Left cardiac atrium (tissue), 4 donors: ENCODE measurements at regions of chr3 and their contacts with region 1.

Region 1: DNA sequence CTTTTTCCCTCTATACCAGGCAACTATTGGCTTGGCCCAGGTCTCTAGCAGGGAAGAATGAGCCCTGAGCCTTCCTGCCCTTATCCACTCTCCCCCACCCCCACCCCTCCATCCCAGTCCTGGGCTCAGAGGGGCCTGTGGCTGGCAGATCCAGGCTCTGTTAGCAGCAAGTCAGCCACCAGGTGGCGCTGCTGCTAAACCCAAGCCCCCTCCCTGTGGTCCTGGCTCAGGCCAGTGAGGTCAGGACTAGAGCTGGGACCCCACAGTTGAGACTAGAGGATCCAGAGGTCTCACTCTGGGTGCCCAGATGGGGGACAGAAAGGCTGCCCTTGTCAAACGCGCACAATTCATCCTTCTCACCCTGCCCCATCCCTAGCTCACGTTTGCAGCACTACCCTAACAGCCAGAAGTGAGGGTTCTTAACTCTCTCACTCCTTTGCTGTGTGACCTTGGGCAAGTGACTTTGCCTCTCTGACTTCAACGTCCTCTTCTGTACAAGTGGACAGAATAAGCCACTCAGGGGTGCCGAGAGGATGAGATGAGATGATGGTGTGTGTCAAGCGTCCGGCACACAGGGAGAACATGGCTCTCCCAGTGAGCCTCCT is 46.8 kb upstream of the SLC6A1 start:
- DNase-seq: peak; percentile 72
- ATAC-seq: peak; percentile 72 to 86

Region 2: GRCh38 chr3:10758304-10759061 is 187.3 kb before region 1 on chr3:
- intact Hi-C with region 1: loop called (anchors 5 to 10 kb)
- DNase-seq: peak; percentile 44
- ATAC-seq: peak; percentile 87 to 93

Region 3: DNA sequence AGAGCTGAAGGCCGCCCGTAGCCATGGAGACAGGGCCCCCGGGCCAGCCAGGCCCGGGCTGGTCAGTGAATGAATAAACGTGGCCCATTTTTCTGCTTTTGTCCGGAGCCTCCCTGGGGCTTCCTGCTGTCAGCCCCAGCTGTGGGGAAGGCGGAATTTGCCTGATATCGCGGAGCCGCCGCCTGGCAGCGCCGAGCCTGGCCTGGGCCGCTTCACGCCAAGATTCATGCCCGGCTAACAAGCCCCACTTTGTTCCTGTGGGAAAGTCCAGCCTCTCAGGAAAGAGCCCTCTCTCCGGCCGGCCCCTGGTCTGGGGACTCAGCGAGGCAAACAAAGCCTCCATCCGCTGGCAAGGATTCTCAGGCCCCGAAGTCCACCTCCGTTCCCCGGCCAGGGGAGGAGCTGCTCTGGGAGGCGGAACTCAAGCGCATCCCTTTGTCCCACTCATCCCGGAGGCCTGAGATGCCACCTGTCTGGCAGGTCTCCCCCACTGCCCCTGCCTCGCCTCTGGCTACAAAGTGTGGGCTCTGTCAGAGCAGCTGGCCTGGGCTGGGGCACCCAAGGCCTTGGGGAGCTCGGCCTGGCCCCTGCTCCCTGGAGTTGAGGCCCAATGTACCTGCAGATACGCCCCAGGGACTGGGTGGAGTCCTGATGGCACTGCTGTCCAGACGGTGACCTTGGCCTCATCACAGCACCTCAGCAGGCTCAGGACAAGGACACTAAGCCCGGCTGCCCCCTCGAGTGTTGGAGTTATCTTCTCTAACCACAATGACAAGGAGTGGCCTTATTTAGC is 181.3 kb before region 1 on chr3:
- intact Hi-C with region 1: loop called (anchors 5 to 10 kb)
- DNase-seq: no peak
- ATAC-seq: no peak

Region 4: GRCh38 chr3:10983219-10983916 is 37.6 kb after region 1 on chr3:
- intact Hi-C with region 1: loop called in 1 of 2 experiments (anchors 5 kb)
- DNase-seq: no peak
- ATAC-seq: peak; percentile 41 to 63

Region 5: DNA sequence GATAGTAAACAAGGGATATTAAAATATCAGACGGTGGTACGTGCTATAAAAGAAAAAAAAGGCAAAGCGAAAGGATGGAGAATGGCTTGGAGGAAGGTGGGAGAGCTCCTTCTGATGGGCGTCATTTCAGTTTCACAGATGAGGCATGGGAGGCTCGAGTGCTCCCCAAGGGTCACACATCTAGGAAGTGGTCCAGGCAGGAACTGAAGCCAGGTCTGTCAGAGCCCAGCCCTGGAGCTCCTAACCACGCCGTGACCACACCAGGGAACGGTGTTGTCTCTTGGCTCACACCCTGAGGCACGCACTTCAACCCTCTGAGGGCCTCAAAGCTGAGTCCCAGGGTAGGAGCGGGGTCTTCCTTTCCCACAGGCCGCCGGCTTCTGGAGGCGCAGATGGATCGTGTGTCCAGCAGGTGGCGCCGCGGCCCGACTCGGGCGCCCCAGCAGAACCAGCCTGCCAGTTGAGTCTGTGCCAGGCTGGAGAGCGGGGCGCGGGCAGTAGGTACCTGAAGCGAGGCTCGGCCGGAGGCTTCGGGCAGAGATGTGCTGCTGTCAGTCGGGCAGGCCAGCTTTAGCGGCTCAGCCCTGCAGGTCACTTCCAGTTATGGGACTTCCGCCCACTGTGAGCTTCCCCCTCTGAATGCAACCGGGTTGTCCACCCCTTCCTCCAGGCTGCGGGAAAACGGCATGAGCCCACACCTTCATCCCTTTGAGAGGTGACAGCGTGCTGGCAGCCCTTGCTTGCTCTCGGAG is 114.9 kb after region 1 on chr3:
- intact Hi-C with region 1: loop called (anchors 1 to 2 kb)
- DNase-seq: peak; percentile 78
- ATAC-seq: peak; percentile 79 to 83

Region 6: DNA sequence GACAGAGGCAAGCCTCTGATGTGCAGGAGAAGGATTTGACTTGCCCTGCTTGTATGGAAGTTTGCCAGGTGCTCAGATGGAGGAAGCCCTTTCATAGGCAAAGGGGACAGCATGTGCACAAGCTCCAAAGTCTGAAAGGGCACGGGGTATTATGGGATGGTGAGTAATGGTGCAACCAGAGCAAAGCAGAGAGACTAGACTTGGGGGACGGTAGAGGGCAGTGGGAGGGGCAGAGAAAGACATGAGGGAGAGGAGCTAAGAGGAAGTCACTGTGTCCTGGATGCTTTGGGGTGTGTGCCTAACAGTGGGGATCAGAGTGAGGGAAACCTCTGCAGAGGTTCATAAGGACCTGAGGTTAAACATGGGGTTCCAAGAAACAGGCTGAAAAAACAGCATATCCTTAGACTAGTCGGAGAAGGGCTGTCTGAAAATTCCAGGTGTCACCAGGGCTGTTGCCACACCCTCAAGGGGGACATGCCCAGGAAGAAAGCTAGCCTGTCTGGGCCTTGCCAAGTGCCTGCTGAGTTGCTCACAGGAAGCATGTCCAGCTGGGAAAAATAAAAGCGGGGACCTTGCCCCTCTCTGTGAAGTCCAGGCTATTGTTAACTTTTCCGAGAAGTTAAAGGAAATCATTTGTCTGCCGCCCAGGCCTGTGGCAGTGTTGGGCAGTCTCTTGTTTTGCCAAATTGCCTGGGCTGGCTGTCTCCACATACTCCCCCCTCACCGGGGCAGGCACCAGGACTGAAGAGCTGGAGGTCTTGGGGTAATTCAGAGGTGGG is 255.7 kb after region 1 on chr3:
- intact Hi-C with region 1: loop called in 1 of 2 experiments (anchors 10 kb)
- DNase-seq: peak; percentile 63
- ATAC-seq: peak; percentile 56 to 60